ENCODE measurements at regions of chr2 and their contacts with region 1.

Region 1: GRCh38 chr2:159118115-159118858 is 149.8 kb downstream of the TANC1 start:
- DNase-seq: peak; percentile 61 to 87 (median 72)
- ATAC-seq: peak; percentile 91
- H3K4me3 ChIP-seq: no peak overlapping the region
- H3K4me3 Mint-ChIP-seq: no peak overlapping the region
- H3K27ac ChIP-seq: no peak overlapping the region
- H3K27ac Mint-ChIP-seq: no peak overlapping the region
- H3K4me1 ChIP-seq: peaks cover 8% of the 10 kb centered on the region
- H3K4me1 Mint-ChIP-seq: peaks cover 8% of the 10 kb centered on the region
- H3K27me3 ChIP-seq: peaks cover 0 to 3% of the 10 kb centered on the region in 2 experiments
- H3K27me3 Mint-ChIP-seq: no peaks in the 10 kb centered on the region
- CTCF ChIP-seq: peak; percentile 95

Region 2: DNA sequence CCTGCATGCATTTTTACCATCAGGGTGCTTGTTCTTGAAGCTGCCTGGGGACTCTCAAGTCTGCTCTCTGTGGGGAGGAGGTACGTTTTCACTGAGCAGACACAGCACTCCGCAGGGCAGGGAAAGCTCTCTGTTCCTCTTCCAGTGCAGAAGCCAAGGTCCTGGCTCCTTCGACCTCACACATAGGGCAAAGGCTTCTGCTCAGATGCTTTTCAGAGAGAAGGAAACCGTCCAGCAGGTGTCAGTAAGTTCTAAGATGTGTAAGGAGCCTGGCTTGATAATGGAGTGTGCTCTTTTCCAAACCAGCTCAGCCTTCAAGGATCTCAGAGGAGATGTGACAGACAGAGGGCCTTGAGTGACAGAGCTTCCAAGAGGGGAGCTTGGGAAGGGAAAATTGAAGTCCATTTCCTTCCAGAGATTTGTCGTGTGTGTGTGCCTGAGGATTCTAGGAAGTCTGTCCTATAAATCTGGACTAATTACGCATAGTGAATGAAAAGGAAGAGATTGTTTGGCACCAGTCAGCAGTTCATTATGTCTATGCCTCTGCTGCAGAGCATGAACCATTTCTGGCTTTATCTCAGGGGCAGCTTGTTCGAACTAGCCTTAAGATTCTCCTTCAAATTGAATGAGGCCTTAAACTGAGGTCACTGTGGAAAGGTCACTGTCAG is 1084.0 kb before region 1 on chr2:
- CTCF ChIA-PET with region 1: no interaction called
- POLR2A ChIA-PET with region 1: no interaction called
- intact Hi-C with region 1: loop called (anchors 10 kb)
- DNase-seq: peak in 4 of 14 experiments; percentile 16 to 47 (median 36)
- ATAC-seq: no peak
- H3K4me3 ChIP-seq: no peak overlapping the region
- H3K4me3 Mint-ChIP-seq: no peak overlapping the region
- H3K27ac ChIP-seq: no peak overlapping the region
- H3K27ac Mint-ChIP-seq: no peak overlapping the region
- H3K4me1 ChIP-seq: no peaks in the 10 kb centered on the region
- H3K4me1 Mint-ChIP-seq: no peaks in the 10 kb centered on the region
- H3K27me3 ChIP-seq: peaks cover 0 to 7% of the 10 kb centered on the region in 2 experiments
- H3K27me3 Mint-ChIP-seq: peaks cover 20% of the 10 kb centered on the region
- CTCF ChIP-seq: peak; percentile 30

Region 3: DNA sequence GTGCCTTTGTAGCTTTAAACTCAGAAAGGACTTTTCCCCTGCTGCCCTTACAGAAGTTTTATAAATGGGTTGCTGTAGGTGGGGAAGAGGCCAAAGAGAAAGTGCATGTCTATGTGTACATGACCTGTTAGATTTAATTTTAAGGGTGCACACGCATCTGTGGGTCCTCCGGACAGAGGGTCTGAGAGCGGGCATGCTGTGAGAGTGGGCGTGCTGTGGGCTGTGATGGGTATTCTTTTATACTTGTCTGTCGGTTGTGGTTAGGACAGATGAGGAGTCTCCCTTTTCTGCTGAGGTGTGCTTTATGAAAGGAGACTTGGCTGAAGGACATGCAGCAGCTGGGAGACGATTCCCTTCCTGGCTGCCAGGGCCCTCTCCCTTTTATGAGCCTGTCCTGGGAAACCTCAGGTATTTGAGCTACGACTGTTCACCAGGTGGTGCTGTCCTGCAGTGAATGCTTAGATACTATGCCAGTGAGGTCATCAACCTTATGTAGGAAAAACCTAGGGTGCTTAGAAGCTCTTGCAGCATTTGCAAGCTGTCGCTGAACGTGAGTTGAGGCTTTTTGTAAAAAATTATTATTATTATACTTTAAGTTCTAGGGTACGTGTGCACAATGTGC is 82.4 kb before region 1 on chr2:
- CTCF ChIA-PET with region 1: interaction called, 8 read pairs
- POLR2A ChIA-PET with region 1: interaction called, 5 read pairs
- intact Hi-C with region 1: loop called (anchors 1 to 2 kb)
- DNase-seq: peak in 5 of 14 experiments; percentile 12 to 62 (median 37)
- ATAC-seq: peak; percentile 51
- H3K4me3 ChIP-seq: no peak overlapping the region
- H3K4me3 Mint-ChIP-seq: no peak overlapping the region
- H3K27ac ChIP-seq: no peak overlapping the region
- H3K27ac Mint-ChIP-seq: no peak overlapping the region
- H3K4me1 ChIP-seq: no peaks in the 10 kb centered on the region
- H3K4me1 Mint-ChIP-seq: no peaks in the 10 kb centered on the region
- H3K27me3 ChIP-seq: no peaks in the 10 kb centered on the region
- H3K27me3 Mint-ChIP-seq: no peaks in the 10 kb centered on the region
- CTCF ChIP-seq: no peak